GM12878 (cell line): ENCODE measurements at regions of chr3 and their contacts with region 1.

Region 1: DNA sequence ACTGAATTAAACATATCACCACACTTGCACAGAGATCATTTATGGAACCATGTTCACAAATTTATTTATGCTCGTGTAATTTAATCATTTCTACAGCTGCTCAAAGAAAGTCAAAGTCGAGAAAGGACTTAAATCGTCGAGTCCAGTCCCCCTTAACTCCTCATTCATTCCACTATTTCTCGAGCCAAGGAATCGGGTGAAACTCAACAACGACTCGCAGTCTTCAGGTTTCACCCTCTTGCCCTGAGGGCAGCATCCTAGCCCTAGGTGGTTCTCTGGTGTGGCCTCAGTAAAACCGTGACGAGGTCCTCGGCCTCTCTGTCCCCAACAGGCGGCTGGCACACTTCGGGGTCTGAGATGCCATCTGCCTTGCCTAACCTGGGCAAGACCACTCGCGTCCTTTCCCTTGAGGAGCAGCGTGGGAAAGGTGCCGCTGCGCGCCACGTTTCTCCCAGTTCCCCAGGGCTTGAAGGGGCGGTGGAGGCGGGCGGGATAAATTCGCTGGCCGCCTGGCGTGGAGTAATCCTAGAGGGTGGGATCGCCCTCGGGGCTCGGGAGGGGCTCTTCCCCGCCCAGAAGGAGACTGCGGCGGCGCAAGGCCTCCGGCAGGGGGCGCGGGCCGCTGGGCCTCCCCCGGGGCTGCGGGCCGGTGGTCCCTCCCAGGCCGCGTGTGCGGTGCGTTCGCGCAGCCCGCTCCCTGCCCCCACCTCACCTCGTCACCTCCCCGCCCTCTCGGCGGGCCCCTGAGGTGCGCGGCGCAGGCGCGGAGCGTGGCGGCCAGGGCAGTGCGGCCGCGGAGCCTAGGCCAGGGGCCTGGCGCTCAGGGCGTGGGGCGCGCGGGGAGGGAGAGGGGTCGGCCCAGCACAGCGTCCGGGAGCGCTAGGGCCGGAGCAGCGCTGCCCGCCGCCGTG is at the start of gene ZNF639:
- DNase-seq: no peak
- ATAC-seq: peak; percentile 84
- H3K4me3 ChIP-seq: peak within 1 kb of the TSS; percentile 78
- H3K27ac ChIP-seq: peak within 1 kb of the TSS; percentile 94
- H3K4me1 ChIP-seq: peaks cover 8% of the 10 kb centered on the region
- H3K27me3 ChIP-seq: no peaks in the 10 kb centered on the region
- CTCF ChIP-seq: peak; percentile 71 to 84 (median 82)
- EP300 ChIP-seq: no peak
- POLR2A ChIP-seq: peak; percentile 81
- RAD21 ChIP-seq: peak; percentile 47
- polyA plus RNA-seq, gene ZNF639: 16.3 to 17.7 TPM

Region 2: DNA sequence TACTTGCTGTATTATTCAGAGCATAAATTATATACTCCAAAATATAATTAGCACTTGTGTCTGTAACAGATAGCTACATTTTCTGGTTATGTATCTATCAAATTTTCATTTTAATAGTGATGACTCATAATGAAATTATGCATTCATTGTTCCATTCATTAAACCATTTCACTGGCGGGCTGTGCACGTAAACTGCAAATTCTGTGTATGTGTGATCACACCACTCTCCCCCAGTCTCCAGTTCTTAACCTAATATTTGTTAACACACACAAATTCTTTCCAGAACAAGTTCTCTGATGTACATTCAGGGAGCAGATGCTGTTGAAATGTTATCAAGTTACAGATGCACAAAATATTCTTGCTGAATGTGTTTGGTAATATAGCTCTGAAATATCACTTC is 790.1 kb before region 1 on chr3:
- CTCF ChIA-PET with region 1: no interaction called
- POLR2A ChIA-PET with region 1: no interaction called
- RAD21 ChIA-PET with region 1: no interaction called
- SMC1A ChIA-PET with region 1: no interaction called
- in situ Hi-C with region 1: no loop called
- intact Hi-C with region 1: loop called (anchors 5 kb)
- DNase-seq: no peak
- ATAC-seq: peak; percentile 78
- H3K4me3 ChIP-seq: no peak overlapping the region
- H3K27ac ChIP-seq: no peak overlapping the region
- H3K4me1 ChIP-seq: peaks cover 18% of the 10 kb centered on the region
- H3K27me3 ChIP-seq: no peaks in the 10 kb centered on the region
- CTCF ChIP-seq: no peak
- EP300 ChIP-seq: peak; percentile 82 to 85
- POLR2A ChIP-seq: no peak
- RAD21 ChIP-seq: no peak

Region 3: DNA sequence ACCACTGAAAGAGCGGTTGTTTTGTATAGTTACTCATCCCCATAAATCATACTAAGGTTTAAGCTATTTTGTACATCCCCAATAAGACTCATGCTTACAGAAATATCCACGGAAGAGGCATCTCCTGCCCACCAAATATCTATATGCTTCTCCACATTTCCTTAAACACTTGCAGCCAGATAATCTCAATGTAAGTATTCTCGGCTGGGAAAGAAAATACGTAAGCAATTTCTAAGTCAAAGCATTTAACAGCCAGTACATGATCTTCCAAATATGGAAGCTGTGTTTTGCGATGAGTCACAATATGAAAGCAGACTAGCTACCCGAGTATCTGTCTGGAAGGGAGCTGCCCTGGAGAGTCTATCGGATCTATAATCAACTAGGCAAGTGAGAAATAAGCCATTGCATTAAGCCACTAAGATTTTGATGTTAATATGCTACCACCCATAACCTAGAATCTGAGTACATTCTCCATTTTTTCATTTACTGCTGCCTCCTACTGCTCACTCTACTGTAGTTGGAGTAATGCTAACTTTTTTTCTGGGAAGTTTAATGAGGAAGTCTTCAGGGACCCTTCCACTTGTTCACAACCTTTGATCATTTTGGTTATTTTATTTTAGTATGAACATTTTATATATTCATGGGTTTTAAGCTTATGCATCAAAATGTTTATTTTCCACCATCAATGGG is 224.0 kb before region 1 on chr3:
- CTCF ChIA-PET with region 1: interaction called, 18 read pairs
- POLR2A ChIA-PET with region 1: interaction called, 3 read pairs
- RAD21 ChIA-PET with region 1: interaction called, 6 read pairs
- SMC1A ChIA-PET with region 1: interaction called, 5 read pairs
- in situ Hi-C with region 1: loop called (anchors 10 kb)
- intact Hi-C with region 1: no loop called
- DNase-seq: no peak
- ATAC-seq: peak; percentile 21; the same call in 2 of the 3 replicates
- H3K4me3 ChIP-seq: no peak overlapping the region
- H3K27ac ChIP-seq: no peak overlapping the region
- H3K4me1 ChIP-seq: no peaks in the 10 kb centered on the region
- H3K27me3 ChIP-seq: no peaks in the 10 kb centered on the region
- CTCF ChIP-seq: no peak
- EP300 ChIP-seq: no peak
- POLR2A ChIP-seq: no peak
- RAD21 ChIP-seq: peak; percentile 6; the same call in 1 of the 2 replicates

Region 4: DNA sequence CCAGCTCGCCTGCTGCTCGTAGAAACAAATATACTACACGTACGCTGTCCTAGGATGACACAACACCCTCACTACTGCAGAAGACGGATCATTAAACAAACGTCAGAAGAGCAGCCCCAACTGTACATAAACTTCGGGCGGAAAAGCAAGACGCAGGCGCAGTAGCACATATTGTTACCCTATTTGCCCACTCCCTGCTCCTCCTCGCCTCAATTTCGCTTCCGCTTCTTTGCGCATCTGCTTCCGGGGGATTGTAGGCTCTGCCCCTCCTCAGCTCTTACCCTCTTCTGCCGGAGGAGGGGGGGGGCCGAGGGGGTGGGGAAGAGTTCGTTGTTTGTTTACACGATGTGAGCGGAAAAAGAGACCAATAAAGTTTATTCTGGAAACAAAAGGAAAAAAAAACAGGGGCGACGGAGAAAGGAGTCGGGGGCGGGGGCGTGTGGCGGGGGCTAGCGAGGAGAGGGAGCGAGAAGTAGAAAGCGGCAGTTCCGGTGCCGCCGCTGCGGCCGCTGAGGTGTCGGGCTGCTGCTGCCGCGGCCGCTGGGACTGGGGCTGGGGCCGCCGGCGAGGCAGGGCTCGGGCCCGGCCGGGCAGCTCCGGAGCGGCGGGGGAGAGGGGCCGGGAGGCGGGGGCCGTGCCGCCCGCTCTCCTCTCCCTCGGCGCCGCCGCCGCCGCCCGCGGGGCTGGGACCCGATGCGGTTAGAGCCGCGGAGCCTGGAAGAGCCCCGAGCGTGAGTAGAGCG is 174.5 kb before region 1 on chr3 and contains the start of gene PIK3CA:
- CTCF ChIA-PET with region 1: interaction called, 14 read pairs
- POLR2A ChIA-PET with region 1: interaction called, 4 read pairs
- RAD21 ChIA-PET with region 1: interaction called, 14 read pairs
- SMC1A ChIA-PET with region 1: interaction called, 11 read pairs
- in situ Hi-C with region 1: loop called (anchors 5 kb)
- intact Hi-C with region 1: no loop called
- DNase-seq: peak; percentile 96
- ATAC-seq: peak; percentile 83
- H3K4me3 ChIP-seq: peak within 1 kb of the TSS; percentile 82
- H3K27ac ChIP-seq: peak within 1 kb of the TSS; percentile 88
- H3K4me1 ChIP-seq: peaks cover 5% of the 10 kb centered on the region; the same call in 1 of the 2 replicates
- H3K27me3 ChIP-seq: no peaks in the 10 kb centered on the region
- CTCF ChIP-seq: no peak
- EP300 ChIP-seq: peak in 1 of 2 experiments; percentile 2; a peak in 1 of 4 replicates
- POLR2A ChIP-seq: peak; percentile 76
- RAD21 ChIP-seq: no peak
- polyA plus RNA-seq, gene PIK3CA: 3.0 to 4.1 TPM

Region 5: GRCh38 chr3:179260949-179261765 is 61.4 kb before region 1 on chr3:
- CTCF ChIA-PET with region 1: interaction called, 4 read pairs
- POLR2A ChIA-PET with region 1: no interaction called
- RAD21 ChIA-PET with region 1: interaction called, 4 read pairs
- SMC1A ChIA-PET with region 1: interaction called, 8 read pairs
- in situ Hi-C with region 1: no loop called
- intact Hi-C with region 1: loop called (anchors 5 kb)
- DNase-seq: no peak
- ATAC-seq: peak; percentile 96
- H3K4me3 ChIP-seq: peak overlapping the region; percentile 88
- H3K27ac ChIP-seq: peak overlapping the region; percentile 18
- H3K4me1 ChIP-seq: peaks cover 4% of the 10 kb centered on the region; the same call in 1 of the 2 replicates
- H3K27me3 ChIP-seq: no peaks in the 10 kb centered on the region
- CTCF ChIP-seq: no peak
- EP300 ChIP-seq: no peak
- POLR2A ChIP-seq: peak; percentile 84
- RAD21 ChIP-seq: no peak

Region 6: GRCh38 chr3:179526989-179527391 is 204.4 kb after region 1 on chr3:
- CTCF ChIA-PET with region 1: no interaction called
- POLR2A ChIA-PET with region 1: no interaction called
- RAD21 ChIA-PET with region 1: no interaction called
- SMC1A ChIA-PET with region 1: no interaction called
- in situ Hi-C with region 1: no loop called
- intact Hi-C with region 1: no loop called
- DNase-seq: no peak
- ATAC-seq: no peak
- H3K4me3 ChIP-seq: no peak overlapping the region
- H3K27ac ChIP-seq: no peak overlapping the region
- H3K4me1 ChIP-seq: no peaks in the 10 kb centered on the region
- H3K27me3 ChIP-seq: peaks cover 0 to 3% of the 10 kb centered on the region in 2 experiments; a peak in 3 of 4 replicates
- CTCF ChIP-seq: no peak
- EP300 ChIP-seq: no peak
- POLR2A ChIP-seq: no peak
- RAD21 ChIP-seq: no peak

Region 7: DNA sequence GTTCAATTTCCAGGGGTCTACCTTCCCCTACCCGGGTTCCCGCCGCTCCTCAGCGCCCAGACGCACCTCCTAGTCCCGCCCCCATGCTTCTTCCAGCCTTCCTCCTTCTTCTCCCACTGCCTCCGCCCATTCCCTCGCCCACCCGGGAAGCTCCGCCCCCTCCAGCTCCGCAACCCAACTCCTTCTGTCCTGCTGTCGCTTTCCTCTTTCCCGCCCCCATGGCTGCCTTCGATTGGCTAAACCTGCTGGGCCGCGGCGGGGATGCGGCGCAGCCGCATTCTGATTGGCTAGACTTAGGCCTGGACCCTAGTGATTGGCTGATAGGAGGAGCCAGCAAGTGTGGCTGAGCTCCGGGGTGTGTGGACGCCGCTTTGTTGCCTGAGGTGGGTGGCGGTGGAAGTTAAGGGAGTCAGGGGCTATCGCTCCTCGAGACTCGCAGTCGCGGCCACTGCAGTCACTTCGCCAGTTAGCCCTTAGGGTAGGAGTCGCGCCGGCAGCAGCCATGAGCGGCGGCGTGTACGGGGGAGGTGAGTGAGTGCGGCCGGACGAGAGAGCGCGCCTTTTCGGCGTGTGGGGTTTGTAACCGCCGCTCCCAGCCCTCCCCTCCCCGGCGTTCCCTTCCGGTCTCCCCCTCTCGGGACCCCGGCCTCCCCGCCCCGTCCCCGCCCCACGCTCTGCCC is 240.2 kb after region 1 on chr3 and contains the start of gene ACTL6A:
- CTCF ChIA-PET with region 1: interaction called, 20 read pairs
- POLR2A ChIA-PET with region 1: interaction called, 12 read pairs
- RAD21 ChIA-PET with region 1: interaction called, 12 read pairs
- SMC1A ChIA-PET with region 1: interaction called, 9 read pairs
- in situ Hi-C with region 1: no loop called
- intact Hi-C with region 1: loop called (anchors 1 kb)
- DNase-seq: peak; percentile 98
- ATAC-seq: peak; percentile 96
- H3K4me3 ChIP-seq: peak within 1 kb of the TSS; percentile 96
- H3K27ac ChIP-seq: peak within 1 kb of the TSS; percentile 75
- H3K4me1 ChIP-seq: no peaks in the 10 kb centered on the region
- H3K27me3 ChIP-seq: no peaks in the 10 kb centered on the region; a peak in 1 of 4 replicates
- CTCF ChIP-seq: no peak
- EP300 ChIP-seq: 0 out of 4 replicates have a peak, but pooled peaks of 1 of the 2 experiments have one; percentile 9
- POLR2A ChIP-seq: peak; percentile 92
- RAD21 ChIP-seq: no peak
- polyA plus RNA-seq, gene ACTL6A: 102 to 123 TPM